Brain microvascular endothelial cell (primary cell): ENCODE measurements at regions of chr7 and their contacts with region 1.

Region 1: GRCh38 chr7:30800785-30801252 is 29.6 kb downstream of the MINDY4 start:
- DNase-seq: peak; percentile 78
- H3K4me3 ChIP-seq: no peak overlapping the region
- H3K27ac ChIP-seq: no peak overlapping the region
- H3K27me3 ChIP-seq: no peaks in the 10 kb centered on the region
- CTCF ChIP-seq: peak; percentile 81

Region 2: GRCh38 chr7:31122649-31123058 is 321.8 kb after region 1 on chr7:
- in situ Hi-C with region 1: loop called (anchors 25 kb)
- DNase-seq: peak; percentile 79
- H3K4me3 ChIP-seq: no peak overlapping the region
- H3K27ac ChIP-seq: no peak overlapping the region
- H3K27me3 ChIP-seq: peaks cover 8% of the 10 kb centered on the region
- CTCF ChIP-seq: peak; percentile 91